ENCODE measurements at regions of chr9 and their contacts with region 1.

Region 1: GRCh38 chr9:81558091-81558830 is 131.1 kb downstream of the TLE1 start:
- DNase-seq: peak; percentile 57
- H3K4me3 ChIP-seq: no peak overlapping the region
- H3K27ac ChIP-seq: peak overlapping the region; percentile 14
- H3K4me1 ChIP-seq: peaks cover 55% of the 10 kb centered on the region
- H3K27me3 ChIP-seq: no peaks in the 10 kb centered on the region
- CTCF ChIP-seq: no peak

Region 2: GRCh38 chr9:81032030-81032572 is 526.2 kb before region 1 on chr9:
- CTCF ChIA-PET with region 1: no interaction called
- dilution Hi-C with region 1: loop called (anchors 10 kb)
- in situ Hi-C with region 1: no loop called
- intact Hi-C with region 1: no loop called
- DNase-seq: peak; percentile 76
- H3K4me3 ChIP-seq: no peak overlapping the region
- H3K27ac ChIP-seq: peak overlapping the region; percentile 62
- H3K4me1 ChIP-seq: peaks cover 37% of the 10 kb centered on the region
- H3K27me3 ChIP-seq: no peaks in the 10 kb centered on the region
- CTCF ChIP-seq: no peak

Region 3: DNA sequence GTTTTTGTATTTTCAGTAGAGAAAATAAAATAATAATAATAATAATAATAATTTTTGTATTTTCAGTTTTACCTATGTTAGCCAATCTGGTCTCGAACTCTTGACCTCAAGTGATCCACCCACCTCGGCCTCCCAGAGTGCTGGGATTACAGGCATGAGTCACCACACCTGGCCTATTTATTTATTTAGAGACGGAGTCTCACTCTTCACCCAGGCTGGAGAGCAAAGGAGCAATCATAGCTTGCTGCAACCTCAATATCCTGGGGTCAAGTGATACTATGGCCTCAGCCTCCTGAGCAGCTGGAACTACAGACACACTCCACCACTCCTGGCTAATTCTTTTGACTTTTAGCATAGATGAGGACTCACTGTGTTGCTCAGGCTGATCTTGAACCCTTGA is 36.4 kb before region 1 on chr9:
- CTCF ChIA-PET with region 1: no interaction called
- dilution Hi-C with region 1: no loop called
- in situ Hi-C with region 1: no loop called
- intact Hi-C with region 1: loop called (anchors 2 kb)
- DNase-seq: peak; percentile 56
- H3K4me3 ChIP-seq: no peak overlapping the region
- H3K27ac ChIP-seq: no peak overlapping the region
- H3K4me1 ChIP-seq: no peaks in the 10 kb centered on the region
- H3K27me3 ChIP-seq: no peaks in the 10 kb centered on the region
- CTCF ChIP-seq: no peak

Region 4: GRCh38 chr9:81729135-81729534 is 170.9 kb after region 1 on chr9:
- CTCF ChIA-PET with region 1: no interaction called
- dilution Hi-C with region 1: no loop called
- in situ Hi-C with region 1: no loop called
- intact Hi-C with region 1: no loop called
- DNase-seq: no peak
- H3K4me3 ChIP-seq: no peak overlapping the region
- H3K27ac ChIP-seq: no peak overlapping the region
- H3K4me1 ChIP-seq: no peaks in the 10 kb centered on the region
- H3K27me3 ChIP-seq: no peaks in the 10 kb centered on the region
- CTCF ChIP-seq: no peak

Measured in mammary epithelial cell (primary cell).